Gastrocnemius medialis (tissue), 4 donors: ENCODE measurements at regions of chr12 and their contacts with region 1.

Region 1: DNA sequence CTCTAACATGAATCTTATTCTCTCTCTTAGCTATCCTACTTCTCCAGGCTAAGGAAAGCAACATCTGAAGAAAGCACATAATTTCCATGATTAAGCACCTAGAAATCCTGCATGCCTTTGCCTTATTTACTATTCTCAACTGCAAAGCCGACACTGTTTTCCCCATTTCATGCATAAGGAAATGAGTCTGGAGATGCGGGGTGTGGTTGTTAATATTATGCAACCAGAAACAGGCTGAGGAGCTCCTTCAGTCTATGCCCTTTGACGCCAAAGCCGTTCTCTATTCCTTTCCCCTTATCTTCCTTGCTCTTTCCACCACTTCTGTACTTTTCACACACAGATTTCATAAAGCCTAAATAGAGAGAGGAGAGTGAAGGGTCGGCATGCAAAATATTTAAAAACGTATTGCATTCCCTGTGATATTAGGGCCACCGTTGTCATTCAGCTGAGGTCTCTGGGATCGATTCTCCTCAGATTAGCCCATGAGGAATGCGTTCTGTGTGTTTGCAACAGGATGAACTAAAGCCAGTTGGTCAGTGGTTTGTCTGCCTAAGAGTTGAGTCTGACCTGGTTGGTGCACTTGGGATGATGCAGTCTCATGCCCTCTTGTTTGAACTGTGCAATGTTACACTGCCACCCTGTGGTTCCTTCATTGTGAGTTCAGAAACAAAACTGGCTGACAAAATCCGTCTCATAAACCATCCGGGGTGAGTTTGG is 53.1 kb upstream of the PLEKHG7 start:
- DNase-seq: peak; percentile 16 to 26
- ATAC-seq: peak; percentile 83 to 89
- H3K4me3 ChIP-seq: no peak overlapping the region
- H3K27ac ChIP-seq: no peak overlapping the region
- H3K4me1 ChIP-seq: no peaks in the 10 kb centered on the region
- H3K27me3 ChIP-seq: no peaks in the 10 kb centered on the region
- CTCF ChIP-seq: peak; percentile 44 to 69 (median 50)
- POLR2A ChIP-seq: no peak

Region 2: GRCh38 chr12:90959538-90960139 is 1690.0 kb before region 1 on chr12:
- in situ Hi-C with region 1: loop called in 1 of 4 experiments (anchors 25 kb)
- intact Hi-C with region 1: no loop called
- DNase-seq: no peak
- ATAC-seq: peak in 1 of 2 donors; percentile 58
- H3K4me3 ChIP-seq: no peak overlapping the region
- H3K27ac ChIP-seq: no peak overlapping the region
- H3K4me1 ChIP-seq: no peaks in the 10 kb centered on the region
- H3K27me3 ChIP-seq: no peaks in the 10 kb centered on the region
- CTCF ChIP-seq: peak in 4 of 5 experiments; percentile 41 to 67 (median 54)
- POLR2A ChIP-seq: no peak

Region 3: DNA sequence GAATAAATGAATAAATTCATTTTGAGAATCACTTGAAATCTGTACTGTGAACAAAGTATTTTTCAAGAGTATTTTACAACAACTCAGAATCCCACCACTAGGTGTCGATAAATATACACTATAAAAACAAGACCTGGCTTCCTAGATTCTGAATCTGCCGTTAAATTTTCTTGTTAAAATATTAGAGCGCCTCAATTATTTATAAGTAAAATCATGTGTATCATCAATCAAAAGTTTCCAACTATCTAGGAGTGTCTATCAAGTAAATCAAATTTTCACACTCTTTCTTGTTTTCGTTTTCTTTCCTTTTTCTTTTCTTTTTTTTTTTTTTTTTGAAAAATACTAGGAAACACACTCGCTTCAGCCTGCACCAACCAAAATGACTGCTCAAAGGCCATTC is 1287.8 kb before region 1 on chr12:
- in situ Hi-C with region 1: loop called in 1 of 4 experiments (anchors 10 kb)
- intact Hi-C with region 1: loop called (anchors 5 kb)
- DNase-seq: no peak
- ATAC-seq: no peak
- H3K4me3 ChIP-seq: peak overlapping the region in 1 of 4 donors; percentile 19
- H3K27ac ChIP-seq: no peak overlapping the region
- H3K4me1 ChIP-seq: no peaks in the 10 kb centered on the region
- H3K27me3 ChIP-seq: no peaks in the 10 kb centered on the region
- CTCF ChIP-seq: peak; percentile 28 to 65 (median 56)
- POLR2A ChIP-seq: no peak

Region 4: DNA sequence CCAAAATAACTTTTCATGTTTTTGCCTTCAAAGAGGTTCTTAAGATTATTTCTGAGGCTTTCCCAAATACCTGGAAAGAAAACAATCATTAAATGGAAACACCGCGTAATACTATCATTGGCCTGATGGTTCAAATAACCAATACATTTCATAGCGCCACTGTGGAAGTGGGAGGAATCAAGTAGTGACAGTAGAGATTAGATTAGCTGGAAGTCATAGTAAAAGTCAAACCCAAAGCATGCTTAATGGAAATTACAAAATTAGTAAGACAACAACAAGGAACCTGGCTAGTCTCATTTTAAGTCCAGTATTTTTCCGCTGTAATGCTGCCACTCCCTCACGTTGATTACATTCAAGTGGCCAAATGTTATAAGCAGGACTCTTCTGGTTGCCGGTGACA is 11.6 kb after region 1 on chr12:
- in situ Hi-C with region 1: no loop called
- intact Hi-C with region 1: no loop called
- DNase-seq: no peak
- ATAC-seq: no peak
- H3K4me3 ChIP-seq: no peak overlapping the region
- H3K27ac ChIP-seq: no peak overlapping the region
- H3K4me1 ChIP-seq: no peaks in the 10 kb centered on the region
- H3K27me3 ChIP-seq: no peaks in the 10 kb centered on the region
- CTCF ChIP-seq: no peak
- POLR2A ChIP-seq: no peak

Region 5: DNA sequence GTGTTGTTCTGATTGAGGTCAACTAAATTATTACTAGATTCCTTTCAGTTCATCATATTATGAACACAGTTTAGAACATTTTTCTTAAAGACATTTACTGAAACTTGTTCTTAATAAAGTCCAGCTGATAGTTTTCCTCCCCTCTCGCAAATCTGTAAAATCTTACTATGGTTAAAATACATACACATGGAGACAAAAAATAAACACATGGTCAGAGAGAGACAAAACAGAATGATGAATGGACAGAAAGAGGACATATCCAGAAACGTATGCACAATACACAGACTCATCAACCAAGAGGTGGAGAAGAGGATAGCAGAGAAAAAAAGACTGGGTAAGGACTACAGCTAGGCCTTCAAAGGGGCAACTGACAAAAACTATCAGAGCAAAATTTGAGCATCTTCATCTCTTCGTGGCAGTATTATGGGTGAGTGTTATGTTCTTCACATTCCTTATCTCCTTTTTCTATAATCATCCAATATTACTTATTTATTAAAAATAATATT is 241.0 kb after region 1 on chr12:
- in situ Hi-C with region 1: no loop called
- intact Hi-C with region 1: no loop called
- DNase-seq: no peak
- ATAC-seq: no peak
- H3K4me3 ChIP-seq: no peak overlapping the region
- H3K27ac ChIP-seq: no peak overlapping the region
- H3K4me1 ChIP-seq: peaks cover 0 to 6% of the 10 kb centered on the region in 2 donors
- H3K27me3 ChIP-seq: no peaks in the 10 kb centered on the region
- CTCF ChIP-seq: no peak
- POLR2A ChIP-seq: no peak